Left cardiac atrium (tissue), 4 donors: ENCODE measurements at regions of chr7 and their contacts with region 1.

Region 1: DNA sequence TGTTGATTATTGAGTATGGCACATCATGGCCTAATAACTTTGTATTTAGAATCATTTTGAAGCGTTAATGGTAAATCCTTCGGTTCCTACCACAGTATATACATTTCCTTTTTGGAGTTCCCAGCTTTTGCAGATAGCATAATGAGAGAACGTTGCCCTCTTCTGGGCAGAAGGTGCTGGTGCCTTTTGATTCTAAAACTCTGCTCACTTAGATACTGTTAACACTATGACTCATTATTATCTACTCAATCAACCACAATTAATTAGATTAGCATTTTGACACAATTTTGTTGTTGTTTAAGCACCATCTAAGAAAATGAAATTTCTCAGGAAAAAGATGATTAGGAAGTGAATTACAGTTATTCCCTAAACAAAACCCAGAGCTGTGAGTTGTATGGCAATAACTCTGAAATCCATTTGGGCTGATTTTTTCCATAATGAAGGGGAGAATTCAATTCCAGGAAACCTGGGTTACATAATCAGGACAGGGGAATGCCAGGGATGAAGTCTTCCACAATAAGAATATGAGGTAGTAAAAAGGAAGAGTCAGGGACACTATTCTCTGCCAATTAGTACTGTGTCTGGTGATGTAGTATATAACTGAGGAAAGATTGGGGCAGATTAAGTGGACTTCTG is 11.5 kb upstream of the DLD start:
- DNase-seq: no peak
- ATAC-seq: peak; percentile 67 to 76

Region 2: DNA sequence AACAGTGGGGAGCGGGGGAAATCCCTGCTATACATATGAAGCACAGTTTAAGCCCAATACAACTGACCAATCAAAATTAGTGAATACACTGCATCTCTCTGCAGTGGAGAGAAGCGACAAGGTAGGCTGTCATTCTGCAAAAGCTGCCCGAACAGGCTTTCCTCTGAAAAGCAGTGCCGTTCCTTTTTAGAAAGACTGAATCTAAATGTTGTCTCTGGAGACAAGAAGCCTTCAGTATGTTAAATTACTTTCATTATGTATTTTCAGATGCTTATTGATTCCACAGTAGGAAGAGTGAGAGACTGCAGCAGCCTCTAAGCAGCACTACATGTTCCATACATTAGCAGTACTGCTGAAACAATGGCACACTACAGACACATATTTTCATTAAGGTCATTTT is 409.6 kb before region 1 on chr7 and contains the start of gene GPR22:
- intact Hi-C with region 1: loop called in 1 of 2 experiments (anchors 5 kb)
- DNase-seq: no peak
- ATAC-seq: peak in 1 of 2 donors; percentile 47
- total RNA-seq, gene GPR22: 15.7 to 33.5 TPM

Region 3: GRCh38 chr7:107743567-107744344 is 135.8 kb before region 1 on chr7 and contains the start of gene CBLL1:
- intact Hi-C with region 1: loop called in 1 of 2 experiments (anchors 5 kb)
- DNase-seq: peak; percentile 98
- ATAC-seq: peak; percentile 99
- total RNA-seq, gene CBLL1: 17.8 to 21.2 TPM

Region 4: GRCh38 chr7:108030516-108030915 is 151.0 kb after region 1 on chr7:
- intact Hi-C with region 1: no loop called
- DNase-seq: no peak
- ATAC-seq: no peak